Esophagus squamous epithelium (tissue), 5 donors: ENCODE measurements at regions of chr7 and their contacts with region 1.

Region 1: DNA sequence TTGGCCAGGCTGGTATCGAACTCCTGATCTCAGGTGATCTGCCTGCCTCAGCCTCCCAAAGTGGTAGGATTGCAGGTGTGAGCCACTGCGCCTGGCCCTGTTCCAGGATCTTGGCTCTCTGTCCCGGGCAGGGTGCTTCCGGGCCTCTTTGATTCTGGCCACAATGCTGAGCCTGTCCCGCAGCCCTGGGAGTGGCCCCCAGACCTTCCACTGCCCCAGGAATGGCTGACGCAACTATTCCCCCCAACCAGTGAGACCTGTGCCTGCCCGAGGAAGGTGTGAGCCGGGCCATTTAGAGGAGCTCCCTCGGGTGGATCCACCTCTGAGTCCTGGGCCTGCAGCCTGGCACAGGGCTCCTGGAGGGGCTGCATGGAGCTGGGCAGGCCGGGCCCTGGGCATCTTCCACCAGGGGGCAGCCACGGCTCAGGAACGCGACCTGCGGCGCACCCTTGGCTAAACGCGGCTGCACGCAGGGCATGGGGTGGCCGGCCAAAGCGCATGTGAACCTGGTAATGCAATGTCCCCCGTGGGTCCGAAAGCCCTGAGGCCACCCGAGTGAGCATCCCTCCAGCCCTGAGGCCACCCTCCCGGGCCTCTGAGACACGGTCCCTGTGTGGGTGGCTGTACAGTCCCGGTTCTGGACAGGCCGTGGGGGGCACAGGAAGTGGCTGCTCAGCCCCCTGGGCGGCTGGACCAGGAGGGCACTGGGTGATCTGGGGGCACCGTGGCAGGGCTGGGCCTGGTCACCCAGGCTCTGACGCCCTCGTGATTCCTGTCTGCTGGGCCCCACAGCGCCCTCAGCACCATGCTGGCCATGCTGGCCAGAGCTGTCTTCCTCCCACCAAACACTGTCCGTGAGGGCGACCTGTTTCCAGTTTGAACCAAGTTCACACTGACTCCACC is 24.8 kb downstream of the GRIFIN start:
- DNase-seq: no peak
- H3K4me3 ChIP-seq: peak overlapping the region; percentile 11 to 58 (median 30)
- H3K27ac ChIP-seq: no peak overlapping the region
- H3K4me1 ChIP-seq: peaks cover 12 to 24% (median 16%) of the 10 kb centered on the region in 3 donors
- H3K27me3 ChIP-seq: no peaks in the 10 kb centered on the region
- CTCF ChIP-seq: peak; percentile 82 to 92 (median 85)
- POLR2A ChIP-seq: no peak

Region 2: DNA sequence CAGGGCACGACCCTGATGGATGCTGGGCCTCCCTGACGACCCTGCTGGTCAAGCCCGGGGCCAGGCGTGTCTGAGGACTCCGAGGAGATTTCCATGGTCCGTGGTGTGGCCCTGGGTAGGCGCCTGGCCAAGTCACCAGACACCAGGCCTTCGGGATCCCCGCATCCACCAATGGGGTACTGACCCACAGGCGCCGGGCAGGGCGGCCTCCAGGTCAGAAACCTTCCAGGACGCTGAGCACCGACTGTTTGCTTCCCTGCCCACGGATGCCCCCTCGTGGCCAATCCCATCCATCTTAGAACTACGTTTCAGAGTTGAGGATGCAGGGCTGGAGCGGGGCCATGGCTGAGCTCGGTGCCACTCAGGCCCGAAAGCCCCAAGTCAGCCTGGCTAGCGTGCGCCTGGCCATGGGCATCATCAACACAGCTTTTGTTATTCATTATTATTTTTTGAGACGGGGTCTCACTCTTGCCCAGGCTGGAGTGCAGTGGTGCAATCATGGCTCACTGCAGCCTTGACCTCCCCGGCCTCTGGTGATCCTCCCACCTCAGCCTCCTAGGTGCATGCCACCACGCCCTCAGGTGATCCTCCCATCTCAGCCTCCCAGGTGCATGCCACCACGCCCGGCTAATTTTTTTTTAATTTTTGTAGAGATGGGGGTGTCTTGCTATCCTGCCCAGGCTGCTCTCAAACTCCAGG is 229.5 kb after region 1 on chr7:
- intact Hi-C with region 1: loop called (anchors 10 kb)
- DNase-seq: no peak
- H3K4me3 ChIP-seq: no peak overlapping the region
- H3K27ac ChIP-seq: no peak overlapping the region
- H3K4me1 ChIP-seq: peaks cover 0 to 16% (median 0%) of the 10 kb centered on the region in 3 donors
- H3K27me3 ChIP-seq: peaks cover 0 to 74% (median 0%) of the 10 kb centered on the region in 4 donors
- CTCF ChIP-seq: peak; percentile 30 to 77 (median 72)
- POLR2A ChIP-seq: no peak